ENCODE measurements at regions of chr20 and their contacts with region 1.

Region 1: GRCh38 chr20:49982346-49983122 is at the start of gene SNAI1:
- DNase-seq: peak; percentile 83
- H3K4me3 ChIP-seq: peak within 1 kb of the TSS; percentile 19 to 53 (median 28)
- H3K27ac ChIP-seq: peak within 1 kb of the TSS; percentile 57 to 70 (median 60)
- H3K4me1 ChIP-seq: peaks cover 17 to 52% (median 27%) of the 10 kb centered on the region in 4 donors
- H3K27me3 ChIP-seq: peaks cover 11% of the 10 kb centered on the region
- CTCF ChIP-seq: peak in 3 of 5 experiments; percentile 33 to 46 (median 41)
- EP300 ChIP-seq: no peak
- POLR2A ChIP-seq: peak; percentile 81
- total RNA-seq, gene SNAI1: 0.32 to 0.41 (median 0.40) TPM in 3 of 4 donors, not detected in the other

Region 2: GRCh38 chr20:50070991-50071888 is 88.7 kb after region 1 on chr20:
- in situ Hi-C with region 1: loop called (anchors 5 kb)
- intact Hi-C with region 1: loop called (anchors 2 kb)
- DNase-seq: peak; percentile 93
- H3K4me3 ChIP-seq: peak overlapping the region in 3 of 4 donors; percentile 23 to 48 (median 28)
- H3K27ac ChIP-seq: no peak overlapping the region
- H3K4me1 ChIP-seq: peaks cover 0 to 19% (median 8%) of the 10 kb centered on the region in 4 donors
- H3K27me3 ChIP-seq: no peaks in the 10 kb centered on the region
- CTCF ChIP-seq: peak; percentile 98 to 100 (median 99)
- EP300 ChIP-seq: no peak
- POLR2A ChIP-seq: no peak

Region 3: DNA sequence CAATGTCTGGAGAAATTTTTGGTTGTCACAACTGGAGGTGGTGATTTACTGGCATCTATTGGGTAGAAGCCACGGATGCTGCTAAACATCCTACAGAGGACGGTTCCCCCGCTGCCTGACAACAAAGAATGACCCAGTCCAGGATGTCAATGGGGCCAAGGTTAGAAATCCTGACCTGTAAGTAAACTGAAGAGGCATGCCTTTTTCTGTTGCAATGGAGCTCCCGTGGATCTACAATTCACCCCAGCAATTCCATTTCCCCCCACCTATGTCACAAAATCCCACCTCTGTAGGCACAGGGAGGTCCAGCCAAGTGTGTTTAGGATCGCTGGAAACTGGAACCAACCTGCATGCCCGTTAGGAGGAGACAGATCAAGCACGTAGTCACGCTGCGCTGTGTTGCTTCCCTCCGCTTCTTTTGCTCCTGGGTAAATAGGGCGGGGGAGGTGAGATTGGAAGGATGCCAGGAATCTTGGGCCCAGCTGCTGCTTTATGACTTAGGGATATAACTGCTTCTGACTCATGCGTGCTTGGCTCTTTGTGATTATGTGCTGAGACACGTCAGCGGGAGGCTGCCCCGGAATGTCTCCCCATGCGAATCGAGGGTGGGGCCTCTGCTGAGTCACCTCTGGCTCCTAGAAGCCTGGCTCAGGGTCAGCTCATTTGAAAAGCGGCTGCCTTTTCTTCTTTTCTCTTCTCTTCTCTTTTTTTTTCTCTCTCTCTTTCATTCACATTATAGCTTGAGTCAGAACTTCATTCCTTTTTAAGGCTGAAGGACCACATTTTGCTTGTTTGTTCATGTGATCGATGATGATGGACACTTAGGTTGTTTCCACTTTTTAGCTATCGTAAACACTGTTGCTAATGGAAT is 183.4 kb after region 1 on chr20:
- in situ Hi-C with region 1: loop called in 1 of 4 experiments (anchors 10 kb)
- intact Hi-C with region 1: no loop called
- DNase-seq: peak; percentile 98
- H3K4me3 ChIP-seq: peak overlapping the region in 2 of 4 donors; percentile 20 to 43
- H3K27ac ChIP-seq: peak overlapping the region; percentile 83 to 86 (median 84)
- H3K4me1 ChIP-seq: peaks cover 10 to 24% (median 16%) of the 10 kb centered on the region in 4 donors
- H3K27me3 ChIP-seq: no peaks in the 10 kb centered on the region
- CTCF ChIP-seq: no peak
- EP300 ChIP-seq: peak; percentile 76
- POLR2A ChIP-seq: peak; percentile 14

Region 4: DNA sequence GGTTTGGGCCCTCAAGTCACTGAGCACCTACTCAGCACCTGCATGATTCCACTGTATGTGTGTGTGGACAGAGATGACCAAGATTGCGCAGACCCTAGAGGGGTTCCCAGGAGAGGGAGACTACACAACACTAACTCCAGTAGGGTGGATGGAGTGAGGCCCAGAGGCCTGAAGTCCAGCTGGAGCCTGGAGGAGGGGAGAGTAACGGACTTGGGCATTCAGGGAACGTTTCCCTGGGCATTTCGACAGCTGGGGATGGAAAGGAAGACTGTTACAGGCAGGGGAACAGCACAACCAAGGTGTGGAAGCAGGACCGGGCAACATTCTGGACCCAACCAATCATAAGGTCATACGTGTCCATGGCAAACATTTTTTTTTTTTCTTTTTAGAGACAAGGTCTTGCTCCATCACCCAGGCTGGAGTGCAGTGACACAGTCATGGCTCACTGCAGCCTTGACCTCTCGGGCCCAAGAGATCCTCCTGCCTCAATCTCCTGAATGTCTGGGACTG is 197.0 kb after region 1 on chr20:
- in situ Hi-C with region 1: no loop called
- intact Hi-C with region 1: loop called (anchors 5 kb)
- DNase-seq: no peak
- H3K4me3 ChIP-seq: no peak overlapping the region
- H3K27ac ChIP-seq: no peak overlapping the region
- H3K4me1 ChIP-seq: peaks cover 0 to 10% (median 0%) of the 10 kb centered on the region in 4 donors
- H3K27me3 ChIP-seq: no peaks in the 10 kb centered on the region
- CTCF ChIP-seq: peak in 1 of 5 experiments; percentile 39
- EP300 ChIP-seq: no peak
- POLR2A ChIP-seq: no peak